Activated naive CD4-positive, alpha-beta T cell treated with anti-CD3 and anti-CD28 coated beads, Interleukin-2, amount 10 ng/mL, durations not matched to agents 7 days and 5 days (primary cell): ENCODE measurements at regions of chr20 and their contacts with region 1.

Region 1: GRCh38 chr20:48904365-48905296 is 16.9 kb upstream of the ARFGEF2 start:
- DNase-seq: peak; percentile 81
- H3K4me3 Mint-ChIP-seq: no peak overlapping the region
- H3K27ac Mint-ChIP-seq: no peak overlapping the region
- H3K4me1 Mint-ChIP-seq: peaks cover 6% of the 10 kb centered on the region
- H3K27me3 Mint-ChIP-seq: peaks cover 54% of the 10 kb centered on the region

Region 2: GRCh38 chr20:48478025-48478769 is 426.4 kb before region 1 on chr20:
- CTCF ChIA-PET with region 1: no interaction called
- DNase-seq: no peak
- H3K4me3 Mint-ChIP-seq: no peak overlapping the region
- H3K27ac Mint-ChIP-seq: no peak overlapping the region
- H3K4me1 Mint-ChIP-seq: no peaks in the 10 kb centered on the region
- H3K27me3 Mint-ChIP-seq: peaks cover 40% of the 10 kb centered on the region

Region 3: GRCh38 chr20:48635433-48636310 is 269.0 kb before region 1 on chr20:
- CTCF ChIA-PET with region 1: interaction called, 33 read pairs
- DNase-seq: peak; percentile 80
- H3K4me3 Mint-ChIP-seq: no peak overlapping the region
- H3K27ac Mint-ChIP-seq: peak overlapping the region; percentile 19
- H3K4me1 Mint-ChIP-seq: peaks cover 9% of the 10 kb centered on the region
- H3K27me3 Mint-ChIP-seq: no peaks in the 10 kb centered on the region

Region 4: GRCh38 chr20:48657475-48658470 is 246.9 kb before region 1 on chr20:
- CTCF ChIA-PET with region 1: interaction called, 125 read pairs
- DNase-seq: peak; percentile 78
- H3K4me3 Mint-ChIP-seq: no peak overlapping the region
- H3K27ac Mint-ChIP-seq: peak overlapping the region; percentile 16
- H3K4me1 Mint-ChIP-seq: peaks cover 10% of the 10 kb centered on the region
- H3K27me3 Mint-ChIP-seq: no peaks in the 10 kb centered on the region

Region 5: DNA sequence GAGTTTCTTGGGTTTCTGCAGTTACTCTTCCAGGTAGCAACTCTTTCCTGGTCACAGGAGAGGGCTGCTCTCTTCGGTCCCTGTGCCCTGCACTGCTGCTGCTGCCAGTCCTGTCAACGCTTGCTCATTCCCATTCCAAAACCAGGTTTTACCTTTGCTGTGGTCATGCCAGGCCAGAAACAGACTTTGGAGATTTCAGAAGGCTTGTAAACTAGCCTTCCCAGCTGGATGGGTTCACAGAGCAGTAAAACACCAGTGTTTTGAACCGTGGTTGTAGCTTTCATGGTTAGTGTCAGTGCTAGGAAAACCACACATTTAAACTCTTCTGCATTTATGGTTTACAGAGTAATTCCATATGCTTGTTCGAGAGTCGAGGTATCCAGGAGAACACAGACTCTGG is 33.0 kb after region 1 on chr20:
- CTCF ChIA-PET with region 1: no interaction called
- DNase-seq: no peak
- H3K4me3 Mint-ChIP-seq: no peak overlapping the region
- H3K27ac Mint-ChIP-seq: no peak overlapping the region
- H3K4me1 Mint-ChIP-seq: peaks cover 23% of the 10 kb centered on the region
- H3K27me3 Mint-ChIP-seq: no peaks in the 10 kb centered on the region

Region 6: GRCh38 chr20:48995589-48995988 is 91.0 kb after region 1 on chr20:
- CTCF ChIA-PET with region 1: no interaction called
- DNase-seq: no peak
- H3K4me3 Mint-ChIP-seq: no peak overlapping the region
- H3K27ac Mint-ChIP-seq: peak overlapping the region; percentile 4
- H3K4me1 Mint-ChIP-seq: no peaks in the 10 kb centered on the region
- H3K27me3 Mint-ChIP-seq: no peaks in the 10 kb centered on the region